BJ (cell line): ENCODE measurements at regions of chr16 and their contacts with region 1.

Region 1: GRCh38 chr16:220021-220420 is 9.2 kb downstream of the LUC7L start:
- DNase-seq: no peak
- H3K4me3 ChIP-seq: no peak overlapping the region
- H3K27me3 ChIP-seq: no peaks in the 10 kb centered on the region
- CTCF ChIP-seq: no peak

Region 2: DNA sequence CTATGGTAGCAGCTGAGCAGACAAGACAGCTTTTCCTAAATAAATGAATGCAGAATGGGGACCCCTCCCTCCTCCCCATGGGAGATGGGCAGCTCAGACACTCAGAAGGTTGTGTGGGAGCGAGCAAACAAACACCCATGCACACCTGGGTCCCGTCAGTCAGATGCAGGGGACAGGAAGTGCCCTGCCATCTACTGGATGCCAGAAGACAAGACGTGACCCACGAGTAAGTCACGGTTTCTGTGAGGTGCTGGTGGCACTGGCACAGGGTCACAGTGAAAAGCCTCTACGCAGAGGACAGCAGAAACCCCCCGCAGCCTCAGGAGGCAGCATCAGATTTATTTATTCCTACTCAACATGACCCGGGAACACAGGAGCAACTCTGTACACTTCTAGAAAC is 31.4 kb before region 1 on chr16:
- CTCF ChIA-PET with region 1: no interaction called
- POLR2A ChIA-PET with region 1: no interaction called
- DNase-seq: no peak
- H3K4me3 ChIP-seq: no peak overlapping the region
- H3K27me3 ChIP-seq: no peaks in the 10 kb centered on the region
- CTCF ChIP-seq: no peak

Region 3: DNA sequence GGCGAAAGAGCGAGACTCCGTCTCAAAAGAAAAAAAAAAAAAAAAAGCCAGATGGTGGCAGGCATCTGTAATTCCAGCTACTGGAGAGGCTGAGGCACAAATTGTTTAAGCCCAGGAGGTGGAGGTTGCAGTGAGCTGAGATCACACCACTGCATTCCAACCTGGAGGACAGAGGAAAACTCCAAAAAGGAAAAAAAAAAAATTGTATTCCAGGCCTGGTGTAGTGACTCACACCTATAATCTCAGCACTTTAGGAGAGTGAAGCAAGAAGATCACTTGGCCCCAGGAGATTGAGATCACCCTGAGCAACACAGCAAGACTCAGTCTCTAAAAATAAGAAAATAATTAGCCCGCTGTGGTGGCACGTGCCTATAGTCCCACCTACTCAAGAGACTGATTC is 19.6 kb before region 1 on chr16:
- CTCF ChIA-PET with region 1: interaction called, 3 read pairs
- POLR2A ChIA-PET with region 1: interaction called, 13 read pairs
- DNase-seq: peak; percentile 52
- H3K4me3 ChIP-seq: no peak overlapping the region
- H3K27me3 ChIP-seq: no peaks in the 10 kb centered on the region
- CTCF ChIP-seq: no peak